Activated B cell treated with CpG ODN at 0.5 μM for 24 hours (primary cell): ENCODE measurements at regions of chr16 and their contacts with region 1.

Region 1: DNA sequence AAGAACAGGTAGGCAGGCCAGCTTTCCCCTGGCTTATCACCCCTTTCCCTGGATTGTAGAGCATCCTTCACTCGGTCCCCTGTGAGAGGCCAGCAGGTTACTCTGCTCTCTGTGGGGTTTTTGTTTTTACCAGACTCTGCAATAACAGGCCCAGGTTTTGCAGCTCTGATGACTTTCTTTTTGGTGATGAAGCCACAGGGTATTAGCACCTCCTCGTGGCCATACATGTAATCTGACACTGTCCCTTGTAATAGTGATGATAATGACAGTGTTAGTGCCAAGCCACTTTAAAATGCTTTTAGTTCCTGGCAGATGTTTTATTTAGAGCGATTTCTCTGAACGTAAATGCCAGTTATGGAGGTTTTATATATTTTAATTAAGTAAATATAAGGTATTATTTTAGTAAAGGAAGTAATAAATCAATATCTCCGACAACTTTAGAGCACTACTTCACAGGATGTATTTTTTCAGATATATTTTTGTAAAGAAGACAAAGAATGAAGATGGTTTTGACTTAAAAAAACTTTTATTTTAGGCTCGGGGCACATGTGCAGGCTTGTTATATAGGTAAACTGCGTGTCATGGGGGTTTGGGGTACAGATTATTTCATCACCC is 38.0 kb upstream of the CPHXL start:
- DNase-seq: no peak
- ATAC-seq: peak; percentile 56
- H3K4me3 Mint-ChIP-seq: no peak overlapping the region
- H3K27ac Mint-ChIP-seq: no peak overlapping the region
- H3K4me1 Mint-ChIP-seq: peaks cover 25% of the 10 kb centered on the region
- H3K27me3 Mint-ChIP-seq: peaks cover 6% of the 10 kb centered on the region
- CTCF ChIP-seq: peak; percentile 37

Region 2: GRCh38 chr16:74709441-74709877 is 1054.8 kb before region 1 on chr16:
- CTCF ChIA-PET with region 1: no interaction called
- POLR2A ChIA-PET with region 1: no interaction called
- intact Hi-C with region 1: loop called (anchors 10 kb)
- DNase-seq: peak; percentile 69
- ATAC-seq: peak; percentile 98
- H3K4me3 Mint-ChIP-seq: no peak overlapping the region
- H3K27ac Mint-ChIP-seq: no peak overlapping the region
- H3K4me1 Mint-ChIP-seq: peaks cover 3% of the 10 kb centered on the region
- H3K27me3 Mint-ChIP-seq: no peaks in the 10 kb centered on the region
- CTCF ChIP-seq: peak; percentile 88

Region 3: GRCh38 chr16:75238132-75238852 is 526.0 kb before region 1 on chr16:
- CTCF ChIA-PET with region 1: interaction called, 19 read pairs
- POLR2A ChIA-PET with region 1: no interaction called
- intact Hi-C with region 1: loop called (anchors 1 kb)
- DNase-seq: no peak
- ATAC-seq: no peak
- H3K4me3 Mint-ChIP-seq: no peak overlapping the region
- H3K27ac Mint-ChIP-seq: no peak overlapping the region
- H3K4me1 Mint-ChIP-seq: peaks cover 2% of the 10 kb centered on the region
- H3K27me3 Mint-ChIP-seq: peaks cover 47% of the 10 kb centered on the region
- CTCF ChIP-seq: no peak

Region 4: DNA sequence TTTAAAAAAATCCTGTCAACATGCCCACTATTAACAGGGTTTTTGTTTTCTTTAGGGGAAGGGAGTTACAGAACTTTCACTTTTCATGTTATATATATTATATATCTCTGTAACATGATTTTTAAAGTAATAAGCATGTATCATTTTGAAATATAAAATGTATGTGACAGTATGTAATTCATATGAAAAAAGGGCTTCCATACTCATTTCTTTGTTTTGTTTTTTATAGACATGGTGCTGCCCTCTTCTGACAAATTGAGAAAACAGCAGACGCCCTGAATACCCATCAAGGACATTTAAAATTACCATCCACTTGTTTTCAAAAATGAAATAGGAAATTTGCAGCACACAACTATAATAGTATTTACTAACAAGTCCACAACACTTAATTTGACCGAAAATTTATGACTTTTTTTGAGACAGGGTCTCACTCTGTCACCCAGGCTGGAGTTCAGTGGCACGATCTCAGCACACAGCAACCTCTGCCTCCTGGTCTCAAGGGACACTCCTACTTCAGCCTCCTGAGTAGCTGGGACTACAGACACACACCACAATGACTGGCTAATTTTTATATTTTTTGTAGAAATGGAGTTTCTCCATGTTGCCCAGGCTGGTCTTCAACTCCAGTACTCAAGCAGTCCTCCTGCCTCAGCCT is 361.3 kb before region 1 on chr16:
- CTCF ChIA-PET with region 1: interaction called, 3 read pairs
- POLR2A ChIA-PET with region 1: no interaction called
- intact Hi-C with region 1: loop called (anchors 1 kb)
- DNase-seq: no peak
- ATAC-seq: peak; percentile 50
- H3K4me3 Mint-ChIP-seq: no peak overlapping the region
- H3K27ac Mint-ChIP-seq: no peak overlapping the region
- H3K4me1 Mint-ChIP-seq: no peaks in the 10 kb centered on the region
- H3K27me3 Mint-ChIP-seq: no peaks in the 10 kb centered on the region
- CTCF ChIP-seq: peak; percentile 60

Region 5: DNA sequence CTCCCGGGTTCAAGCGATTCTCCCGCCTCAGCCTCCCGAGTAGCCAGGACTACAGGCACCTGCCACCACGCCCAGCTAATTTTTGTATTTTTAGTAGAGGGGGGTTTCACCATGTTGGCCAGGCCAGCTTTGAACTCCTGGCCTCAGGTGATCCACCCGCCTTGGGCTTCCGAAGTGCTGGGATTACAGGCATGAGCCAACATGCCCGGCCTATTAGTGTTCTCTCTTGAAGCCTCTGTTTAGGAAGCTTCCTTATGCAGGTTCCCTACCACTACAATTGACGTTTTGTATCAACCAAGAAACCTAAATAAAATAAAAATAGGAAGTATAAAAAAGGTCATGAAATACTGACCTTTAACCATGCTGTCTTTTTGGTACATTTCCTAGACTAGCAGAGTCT is 244.4 kb before region 1 on chr16:
- CTCF ChIA-PET with region 1: interaction called, 5 read pairs
- POLR2A ChIA-PET with region 1: no interaction called
- intact Hi-C with region 1: loop called (anchors 1 kb)
- DNase-seq: no peak
- ATAC-seq: no peak
- H3K4me3 Mint-ChIP-seq: no peak overlapping the region
- H3K27ac Mint-ChIP-seq: no peak overlapping the region
- H3K4me1 Mint-ChIP-seq: peaks cover 13% of the 10 kb centered on the region
- H3K27me3 Mint-ChIP-seq: no peaks in the 10 kb centered on the region
- CTCF ChIP-seq: no peak

Region 6: GRCh38 chr16:75566040-75566810 is 198.0 kb before region 1 on chr16 and contains the start of gene GABARAPL2:
- CTCF ChIA-PET with region 1: interaction called, 4 read pairs
- POLR2A ChIA-PET with region 1: no interaction called
- intact Hi-C with region 1: loop called (anchors 1 kb)
- DNase-seq: peak; percentile 98
- ATAC-seq: peak; percentile 69
- H3K4me3 Mint-ChIP-seq: peak within 1 kb of the TSS; percentile 100
- H3K27ac Mint-ChIP-seq: peak within 1 kb of the TSS; percentile 98
- H3K4me1 Mint-ChIP-seq: peaks cover 57% of the 10 kb centered on the region
- H3K27me3 Mint-ChIP-seq: no peaks in the 10 kb centered on the region
- CTCF ChIP-seq: no peak
- total RNA-seq, gene GABARAPL2: 62.9 and 69.4 TPM in 2 replicates